BJ (cell line): ENCODE measurements at regions of chr13 and their contacts with region 1.

Region 1: DNA sequence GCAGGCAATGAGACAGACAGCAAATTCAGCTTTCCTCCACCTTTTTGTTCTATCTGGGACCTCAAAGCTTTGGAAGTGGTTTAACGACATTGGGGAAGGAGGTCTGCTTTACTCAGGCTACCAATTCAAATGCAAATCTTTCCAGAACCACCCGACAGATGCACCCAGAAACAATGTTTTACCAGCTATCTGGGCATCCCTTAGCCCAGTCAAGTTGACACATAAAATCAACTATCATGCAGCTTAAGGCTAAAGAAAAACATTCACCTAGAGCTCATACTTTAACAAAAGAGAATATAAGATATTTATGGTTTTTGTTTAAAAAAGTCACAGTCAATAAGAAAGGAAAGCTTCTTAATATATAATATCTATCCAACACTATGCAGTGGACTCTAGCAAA is 246.0 kb downstream of the NALCN start:
- DNase-seq: no peak
- H3K4me3 ChIP-seq: no peak overlapping the region
- H3K27me3 ChIP-seq: no peaks in the 10 kb centered on the region
- CTCF ChIP-seq: no peak

Region 2: GRCh38 chr13:101157261-101157660 is 13.0 kb before region 1 on chr13:
- CTCF ChIA-PET with region 1: interaction called, 13 read pairs
- POLR2A ChIA-PET with region 1: no interaction called
- DNase-seq: no peak
- H3K4me3 ChIP-seq: no peak overlapping the region
- H3K27me3 ChIP-seq: no peaks in the 10 kb centered on the region
- CTCF ChIP-seq: no peak

Region 3: DNA sequence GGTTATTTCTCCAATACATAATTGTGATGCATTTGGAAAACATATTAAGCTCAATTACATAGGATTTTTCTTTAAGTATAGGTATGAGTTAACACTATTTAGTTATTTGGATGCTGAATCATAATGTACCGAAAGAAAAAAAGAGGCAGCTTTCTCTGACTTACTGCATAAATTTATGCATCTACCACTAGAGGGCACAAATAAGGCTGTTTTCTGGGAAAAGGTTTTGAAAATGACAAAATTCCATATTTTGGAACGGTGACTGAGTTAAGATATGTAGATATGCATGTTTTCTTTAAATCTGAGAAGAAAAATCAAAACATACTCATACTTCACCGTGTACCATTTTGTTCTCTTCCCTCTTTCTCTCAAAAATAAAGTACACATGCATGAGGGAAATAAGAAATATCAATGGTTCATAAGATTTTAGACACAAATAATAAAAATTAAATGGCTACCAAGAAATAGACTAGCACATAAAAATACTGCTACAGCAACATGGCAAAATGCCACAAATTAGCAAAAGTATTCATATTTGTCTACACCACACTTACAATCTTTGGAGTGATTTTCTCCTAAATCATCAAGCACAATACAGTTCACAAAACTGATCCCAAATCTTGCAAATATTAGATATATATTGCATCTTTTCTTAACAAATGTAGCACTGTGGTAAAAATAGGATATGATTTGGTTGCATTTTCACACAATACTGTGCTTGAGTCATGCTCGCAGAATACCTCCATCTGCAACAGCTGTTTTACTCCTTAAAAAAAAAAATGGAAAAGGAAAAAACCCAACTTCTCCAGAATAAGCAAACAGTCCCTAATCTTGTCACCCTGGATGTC is 971.5 kb after region 1 on chr13:
- CTCF ChIA-PET with region 1: no interaction called
- POLR2A ChIA-PET with region 1: no interaction called
- DNase-seq: no peak
- H3K4me3 ChIP-seq: no peak overlapping the region
- H3K27me3 ChIP-seq: no peaks in the 10 kb centered on the region
- CTCF ChIP-seq: peak; percentile 70